SK-N-SH (cell line): ENCODE measurements at regions of chr17 and their contacts with region 1.

Region 1: GRCh38 chr17:46751425-46751824 is 67.1 kb downstream of the WNT3 start:
- DNase-seq: no peak
- H3K4me3 ChIP-seq: no peak overlapping the region
- H3K27ac ChIP-seq: no peak overlapping the region
- H3K4me1 ChIP-seq: no peaks in the 10 kb centered on the region
- H3K27me3 ChIP-seq: no peaks in the 10 kb centered on the region
- CTCF ChIP-seq: no peak
- EP300 ChIP-seq: no peak
- RAD21 ChIP-seq: no peak

Region 2: DNA sequence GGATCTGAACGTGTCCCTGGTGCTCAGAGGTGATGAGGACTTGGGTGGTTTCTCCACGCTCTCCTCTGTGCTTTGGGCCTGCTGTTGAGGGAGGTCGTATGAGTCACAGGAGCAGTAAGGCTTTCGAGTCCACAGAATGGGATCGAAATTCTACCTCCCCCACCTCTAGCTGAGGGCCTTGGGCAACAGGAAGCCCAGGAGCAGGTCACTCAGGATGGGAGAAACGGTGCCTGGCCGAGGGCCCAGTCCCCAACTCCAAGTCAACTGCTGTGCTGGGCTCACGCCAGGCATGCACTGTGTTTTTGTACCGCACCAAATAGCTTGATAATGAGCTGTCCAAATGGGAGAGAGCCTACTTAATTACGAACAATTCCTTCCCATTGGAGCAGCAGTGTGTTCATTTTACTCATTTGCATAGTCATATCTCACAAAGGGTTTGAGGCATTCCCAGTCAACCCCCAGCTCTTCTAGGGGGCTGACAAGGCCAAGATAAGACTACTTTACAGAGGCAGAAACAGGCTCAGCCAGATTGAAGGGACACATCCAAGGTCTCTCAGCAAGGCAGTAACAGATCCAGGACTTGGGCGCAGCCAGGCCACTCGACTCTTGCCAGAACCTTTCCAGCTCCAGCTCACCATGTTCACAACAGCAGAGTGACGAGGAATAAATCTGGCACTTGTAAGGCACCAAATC is 13.4 kb after region 1 on chr17:
- CTCF ChIA-PET with region 1: interaction called, 13 read pairs
- POLR2A ChIA-PET with region 1: interaction called, 3 read pairs
- DNase-seq: peak; percentile 59
- H3K4me3 ChIP-seq: no peak overlapping the region
- H3K27ac ChIP-seq: peak overlapping the region; percentile 52 to 63
- H3K4me1 ChIP-seq: peaks cover 18 to 24% of the 10 kb centered on the region in 2 experiments; a peak in 3 of 4 replicates
- H3K27me3 ChIP-seq: no peaks in the 10 kb centered on the region
- CTCF ChIP-seq: no peak
- EP300 ChIP-seq: peak in 1 of 2 experiments; percentile 91; a peak in 1 of 4 replicates
- RAD21 ChIP-seq: no peak

Region 3: GRCh38 chr17:47172698-47173565 is 421.5 kb after region 1 on chr17:
- CTCF ChIA-PET with region 1: no interaction called
- POLR2A ChIA-PET with region 1: no interaction called
- DNase-seq: no peak
- H3K4me3 ChIP-seq: no peak overlapping the region
- H3K27ac ChIP-seq: no peak overlapping the region
- H3K4me1 ChIP-seq: no peaks in the 10 kb centered on the region; a peak in 1 of 4 replicates
- H3K27me3 ChIP-seq: no peaks in the 10 kb centered on the region
- CTCF ChIP-seq: no peak
- EP300 ChIP-seq: no peak
- RAD21 ChIP-seq: no peak

Region 4: GRCh38 chr17:47821424-47822391 is 1070.3 kb after region 1 on chr17 and contains the start of gene OSBPL7:
- CTCF ChIA-PET with region 1: no interaction called
- POLR2A ChIA-PET with region 1: no interaction called
- DNase-seq: peak; percentile 99
- H3K4me3 ChIP-seq: peak within 1 kb of the TSS; percentile 90 to 93
- H3K27ac ChIP-seq: peak within 1 kb of the TSS; percentile 37 to 88
- H3K4me1 ChIP-seq: peaks cover 11 to 26% of the 10 kb centered on the region in 2 experiments; a peak in 3 of 4 replicates
- H3K27me3 ChIP-seq: no peaks in the 10 kb centered on the region
- CTCF ChIP-seq: peak; percentile 57
- EP300 ChIP-seq: no peak
- RAD21 ChIP-seq: peak; percentile 15; the same call in 1 of the 2 replicates
- polyA plus RNA-seq, gene OSBPL7: 23.7 and 24.7 TPM in 2 replicates